ENCODE measurements at regions of chr12 and their contacts with region 1.

Region 1: GRCh38 chr12:70733385-70733784 is 96.2 kb upstream of the PTPRB start:
- DNase-seq: no peak
- H3K4me3 ChIP-seq: no peak overlapping the region
- H3K27ac ChIP-seq: no peak overlapping the region
- H3K4me1 ChIP-seq: no peaks in the 10 kb centered on the region
- H3K27me3 ChIP-seq: no peaks in the 10 kb centered on the region
- CTCF ChIP-seq: peak; percentile 43 to 67 (median 58)

Region 2: DNA sequence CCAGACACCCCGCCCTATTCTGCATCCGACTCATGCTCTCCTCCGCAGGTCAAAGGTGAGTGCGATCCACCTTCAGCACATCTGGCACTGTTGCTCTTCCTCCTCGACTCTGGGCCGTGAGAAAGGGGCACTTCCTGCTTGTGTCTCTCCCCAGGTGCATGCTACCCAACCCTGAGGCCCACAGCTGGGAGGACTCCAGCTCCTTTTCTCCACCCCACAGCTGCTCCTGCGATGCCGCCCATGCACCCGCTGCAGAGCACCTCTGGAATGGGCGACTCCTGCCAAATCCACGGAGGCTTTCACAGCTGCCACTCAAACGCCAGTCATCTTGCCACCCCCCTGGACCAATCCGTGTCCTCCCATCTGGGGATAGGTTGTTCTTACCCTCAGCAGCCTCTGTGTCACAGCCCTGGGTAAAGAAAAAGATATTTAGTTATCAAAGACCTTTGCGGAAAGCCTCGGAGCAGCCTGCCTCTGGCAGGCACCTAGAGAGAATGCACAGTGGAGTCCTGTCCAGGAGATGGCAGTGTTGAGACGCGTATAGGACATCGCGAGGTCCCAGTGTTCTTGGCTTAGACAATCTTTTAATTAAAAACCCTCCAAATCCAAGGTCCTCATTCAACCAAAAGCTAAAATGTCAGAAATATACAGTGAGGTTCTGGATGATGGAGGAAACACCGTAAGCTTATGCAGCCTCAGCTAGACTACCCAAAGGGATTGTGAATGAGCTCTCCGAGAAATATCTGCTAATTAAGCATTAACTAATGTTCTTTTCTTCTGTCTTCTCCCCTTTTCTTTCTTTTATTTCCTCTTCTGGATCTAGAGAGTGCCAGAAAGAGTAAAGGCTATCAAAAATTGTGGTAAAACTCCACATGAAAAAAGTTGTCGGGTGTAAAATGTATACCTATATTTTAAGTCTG is 854.1 kb before region 1 on chr12:
- intact Hi-C with region 1: loop called (anchors 5 kb)
- DNase-seq: peak in 1 of 2 donors; percentile 77
- H3K4me3 ChIP-seq: no peak overlapping the region
- H3K27ac ChIP-seq: no peak overlapping the region
- H3K4me1 ChIP-seq: peaks cover 0 to 7% of the 10 kb centered on the region in 2 donors
- H3K27me3 ChIP-seq: no peaks in the 10 kb centered on the region
- CTCF ChIP-seq: peak; percentile 62 to 88 (median 82)

Measured in ascending aorta (tissue), 2 donors.